ENCODE measurements at regions of chr7 and their contacts with region 1.

Region 1: GRCh38 chr7:139109188-139109982 is at the start of gene ZC3HAV1:
- DNase-seq: peak; percentile 90
- H3K4me3 Mint-ChIP-seq: peak within 1 kb of the TSS; percentile 92
- H3K27ac Mint-ChIP-seq: peak within 1 kb of the TSS; percentile 95
- H3K4me1 Mint-ChIP-seq: peaks cover 34% of the 10 kb centered on the region
- H3K27me3 Mint-ChIP-seq: no peaks in the 10 kb centered on the region
- total RNA-seq, gene ZC3HAV1: 131 to 134 TPM

Region 2: DNA sequence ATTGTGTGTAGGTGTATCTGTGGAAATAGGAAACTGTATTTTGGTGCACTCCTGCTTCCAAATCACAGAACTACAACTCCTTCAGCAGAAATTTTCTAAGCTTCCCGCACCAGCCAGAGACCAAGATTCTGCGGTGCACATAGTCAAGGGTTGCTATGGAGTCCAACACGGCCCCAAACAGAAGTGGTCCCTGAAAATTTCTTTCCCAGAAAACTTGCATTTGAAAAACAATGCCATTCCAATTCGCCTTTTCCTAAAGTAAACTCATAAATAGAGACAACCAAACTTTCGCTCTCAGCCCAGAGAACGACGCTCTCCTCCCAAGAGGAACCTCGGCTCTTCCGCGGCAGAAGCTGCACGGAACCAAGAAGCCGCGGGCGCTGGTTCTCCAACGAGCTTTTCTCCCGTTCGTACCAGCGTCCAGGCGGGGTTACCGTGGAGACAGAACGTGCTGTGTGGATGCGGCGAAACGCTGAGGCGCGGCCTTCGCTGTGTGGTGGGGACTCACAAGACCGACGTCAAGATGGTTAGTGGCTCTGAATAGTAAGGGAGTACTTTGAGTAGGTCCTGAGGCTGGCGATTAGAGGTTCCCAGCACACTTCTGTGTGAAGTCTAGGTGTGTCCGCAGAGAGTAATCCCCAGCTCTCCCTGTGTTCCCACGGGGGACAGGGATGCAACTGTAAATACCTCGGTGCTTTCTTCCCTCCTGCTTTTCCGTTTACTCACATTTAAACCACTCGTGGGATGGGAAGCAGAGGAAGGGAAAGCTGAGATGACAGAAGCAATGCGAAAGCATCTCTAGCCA is 24.2 kb after region 1 on chr7:
- CTCF ChIA-PET with region 1: interaction called, 4 read pairs
- intact Hi-C with region 1: loop called (anchors 1 kb)
- DNase-seq: peak; percentile 92
- H3K4me3 Mint-ChIP-seq: peak overlapping the region; percentile 84
- H3K27ac Mint-ChIP-seq: peak overlapping the region; percentile 68
- H3K4me1 Mint-ChIP-seq: peaks cover 22% of the 10 kb centered on the region
- H3K27me3 Mint-ChIP-seq: no peaks in the 10 kb centered on the region

Region 3: DNA sequence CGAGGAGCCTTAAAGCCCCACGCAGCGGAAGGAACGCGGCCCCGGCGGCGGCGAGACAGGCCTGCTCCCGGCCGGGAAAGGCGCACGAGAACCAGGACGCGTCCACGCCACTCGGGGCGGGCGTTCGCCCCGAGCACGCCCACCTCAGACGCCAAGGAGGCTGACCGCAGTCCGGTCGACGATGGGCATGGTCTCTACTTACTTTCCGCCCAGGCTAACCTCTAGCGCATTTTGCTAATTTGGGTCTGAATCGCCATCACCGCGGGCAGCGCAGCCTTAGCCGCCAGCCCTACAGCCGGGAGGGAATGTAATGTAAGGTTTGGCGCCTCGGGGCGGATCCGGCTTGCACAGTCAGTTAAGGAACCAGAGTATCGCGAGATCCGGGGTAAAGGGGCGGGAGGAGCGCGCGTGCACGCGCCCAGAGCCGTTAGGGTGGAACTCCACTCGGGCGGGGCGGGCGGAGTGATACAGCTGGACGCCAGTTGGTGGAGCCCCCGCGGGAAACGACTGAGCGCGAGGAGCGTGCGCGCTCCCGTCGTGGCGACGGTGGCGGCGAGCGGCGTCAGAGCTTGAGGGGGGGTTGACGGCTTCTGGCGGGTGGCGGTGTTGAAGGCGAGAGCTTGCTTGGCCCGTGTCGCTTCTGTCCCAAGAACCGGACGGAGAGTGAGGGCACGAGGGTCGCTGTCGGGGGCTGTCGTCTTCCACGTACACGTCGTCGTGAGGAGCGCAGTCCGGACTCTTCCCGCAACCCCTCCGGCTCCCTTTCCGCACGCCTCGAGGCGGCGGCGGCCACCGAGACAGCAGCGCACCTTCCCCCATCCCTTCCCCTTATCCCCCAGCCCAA is 250.2 kb after region 1 on chr7 and contains the start of gene LUC7L2:
- CTCF ChIA-PET with region 1: no interaction called
- intact Hi-C with region 1: loop called (anchors 1 kb)
- DNase-seq: peak; percentile 100
- H3K4me3 Mint-ChIP-seq: peak within 1 kb of the TSS; percentile 93
- H3K27ac Mint-ChIP-seq: peak within 1 kb of the TSS; percentile 98
- H3K4me1 Mint-ChIP-seq: peaks cover 33% of the 10 kb centered on the region
- H3K27me3 Mint-ChIP-seq: no peaks in the 10 kb centered on the region
- total RNA-seq, gene LUC7L2: 132 to 138 TPM